Heart right ventricle (tissue), 16 donors: ENCODE measurements at regions of chr2 and their contacts with region 1.

Region 1: DNA sequence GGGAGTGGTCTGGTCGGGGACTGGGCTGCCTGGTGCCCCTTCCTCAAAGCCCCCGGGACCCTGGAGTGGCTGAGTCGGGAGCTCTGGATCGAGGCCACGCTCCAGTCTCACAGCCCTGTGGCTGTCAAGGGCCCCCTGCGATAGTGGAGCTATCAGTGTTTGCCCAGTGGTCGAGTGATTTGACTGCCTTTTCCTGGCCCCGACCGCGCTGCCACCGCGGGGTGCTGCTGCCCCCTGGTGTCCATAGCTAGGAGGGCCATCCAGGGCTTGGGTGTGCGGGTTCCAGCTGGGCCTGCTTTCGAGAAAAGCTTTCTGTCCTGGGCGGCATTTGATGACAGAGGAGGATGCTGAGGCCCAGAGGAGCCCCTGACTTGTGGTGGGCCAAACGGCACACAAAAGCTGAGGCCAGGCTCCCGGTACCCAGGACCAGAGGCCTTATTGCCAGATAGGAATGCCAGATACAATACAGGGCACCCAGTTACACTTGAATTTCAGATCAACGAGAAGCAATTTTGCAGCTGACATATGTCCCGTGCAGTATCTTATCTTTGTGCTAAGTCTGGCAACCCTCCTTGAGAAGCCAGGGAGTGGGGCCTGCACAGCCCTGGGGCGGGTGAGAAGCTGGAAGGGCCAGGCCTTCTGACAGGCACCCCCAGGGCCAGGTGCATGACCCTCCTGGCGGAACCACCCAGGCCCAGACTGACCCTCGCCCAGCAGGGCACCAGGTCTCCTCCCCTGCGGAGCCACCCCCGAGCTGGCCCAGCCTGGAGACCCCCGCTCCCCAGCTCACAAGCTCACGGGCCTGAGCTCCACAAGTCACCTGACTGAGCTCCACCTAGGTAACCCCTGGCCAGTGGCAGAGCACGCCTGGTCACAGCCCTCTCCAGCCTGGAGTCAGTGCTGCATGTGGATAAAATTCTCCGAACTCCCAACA is 13.0 kb downstream of the ODC1 start:
- DNase-seq: peak; percentile 62 to 78
- ATAC-seq: peak; percentile 74 to 93 (median 86)
- H3K4me3 ChIP-seq: no peak overlapping the region
- H3K27ac ChIP-seq: no peak overlapping the region
- H3K4me1 ChIP-seq: peaks cover 0 to 26% (median 10%) of the 10 kb centered on the region in 9 donors
- H3K27me3 ChIP-seq: peaks cover 0 to 8% (median 0%) of the 10 kb centered on the region in 7 donors
- CTCF ChIP-seq: peak; percentile 92 to 99 (median 97)

Region 2: DNA sequence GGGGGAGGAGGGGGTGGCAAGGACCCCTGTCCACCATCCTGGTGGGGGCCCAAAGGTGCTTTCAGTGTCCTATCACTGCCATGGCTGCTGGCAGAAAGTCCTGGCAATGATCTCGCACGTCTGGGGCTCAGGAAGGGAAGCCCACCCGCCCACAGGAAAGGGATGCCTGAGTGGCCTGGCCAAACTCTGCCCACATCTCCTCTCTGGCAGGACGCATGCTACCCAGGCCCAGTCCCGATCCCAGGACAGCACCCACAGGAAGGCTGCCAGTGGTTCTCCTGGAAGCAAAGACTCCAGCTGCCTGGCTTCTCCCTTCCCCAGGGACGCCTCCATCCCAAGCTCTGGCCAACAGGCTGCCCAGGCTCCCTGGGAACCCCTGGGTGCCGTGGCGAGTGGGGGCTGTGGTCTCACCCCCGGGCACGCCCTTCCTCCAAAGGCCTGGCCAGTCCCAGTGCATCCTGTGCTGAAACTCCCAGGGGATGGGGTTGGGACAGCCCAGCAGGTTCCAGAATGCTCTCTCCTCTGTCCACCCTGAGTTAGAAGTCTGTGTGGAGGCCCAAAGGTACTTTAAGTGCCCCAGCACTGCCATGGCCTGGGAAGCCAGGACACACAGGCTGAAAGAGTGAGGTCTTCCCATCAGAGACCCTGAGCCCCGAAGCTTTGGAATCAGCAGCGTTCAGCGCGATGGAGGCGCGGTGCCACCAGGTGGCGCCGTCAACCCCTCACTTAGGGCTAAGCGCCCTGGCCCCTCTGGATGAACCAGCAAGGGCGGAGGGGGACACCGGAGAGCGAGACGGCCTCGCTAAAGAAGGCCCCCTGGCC is 621.6 kb before region 1 on chr2:
- intact Hi-C with region 1: loop called in 2 of 10 experiments (anchors 10 kb)
- DNase-seq: peak; percentile 61 to 76
- ATAC-seq: peak; percentile 79 to 92 (median 86)
- H3K4me3 ChIP-seq: peak overlapping the region in 5 of 10 donors; percentile 3 to 29 (median 25)
- H3K27ac ChIP-seq: no peak overlapping the region
- H3K4me1 ChIP-seq: peaks cover 0 to 16% (median 13%) of the 10 kb centered on the region in 9 donors
- H3K27me3 ChIP-seq: peaks cover 0 to 3% (median 0%) of the 10 kb centered on the region in 7 donors
- CTCF ChIP-seq: peak; percentile 80 to 97 (median 94)

Region 3: GRCh38 chr2:10072656-10073480 is 362.3 kb before region 1 on chr2:
- intact Hi-C with region 1: loop called in 9 of 10 experiments (anchors 1 to 5 kb)
- DNase-seq: peak; percentile 63 to 85
- ATAC-seq: peak; percentile 87 to 94 (median 92)
- H3K4me3 ChIP-seq: no peak overlapping the region
- H3K27ac ChIP-seq: no peak overlapping the region
- H3K4me1 ChIP-seq: peaks cover 0 to 9% (median 0%) of the 10 kb centered on the region in 9 donors
- H3K27me3 ChIP-seq: peaks cover 0 to 49% (median 0%) of the 10 kb centered on the region in 7 donors
- CTCF ChIP-seq: peak; percentile 80 to 91 (median 86)

Region 4: GRCh38 chr2:10141736-10142642 is 293.2 kb before region 1 on chr2:
- intact Hi-C with region 1: loop called in 2 of 10 experiments (anchors 5 kb)
- DNase-seq: peak in 1 of 2 donors; percentile 38
- ATAC-seq: peak in 5 of 8 donors; percentile 32 to 59 (median 49)
- H3K4me3 ChIP-seq: no peak overlapping the region
- H3K27ac ChIP-seq: no peak overlapping the region
- H3K4me1 ChIP-seq: peaks cover 0 to 17% (median 9%) of the 10 kb centered on the region in 9 donors
- H3K27me3 ChIP-seq: no peaks in the 10 kb centered on the region
- CTCF ChIP-seq: peak; percentile 24 to 63 (median 56)